ENCODE measurements at regions of chr10 and their contacts with region 1.

Region 1: DNA sequence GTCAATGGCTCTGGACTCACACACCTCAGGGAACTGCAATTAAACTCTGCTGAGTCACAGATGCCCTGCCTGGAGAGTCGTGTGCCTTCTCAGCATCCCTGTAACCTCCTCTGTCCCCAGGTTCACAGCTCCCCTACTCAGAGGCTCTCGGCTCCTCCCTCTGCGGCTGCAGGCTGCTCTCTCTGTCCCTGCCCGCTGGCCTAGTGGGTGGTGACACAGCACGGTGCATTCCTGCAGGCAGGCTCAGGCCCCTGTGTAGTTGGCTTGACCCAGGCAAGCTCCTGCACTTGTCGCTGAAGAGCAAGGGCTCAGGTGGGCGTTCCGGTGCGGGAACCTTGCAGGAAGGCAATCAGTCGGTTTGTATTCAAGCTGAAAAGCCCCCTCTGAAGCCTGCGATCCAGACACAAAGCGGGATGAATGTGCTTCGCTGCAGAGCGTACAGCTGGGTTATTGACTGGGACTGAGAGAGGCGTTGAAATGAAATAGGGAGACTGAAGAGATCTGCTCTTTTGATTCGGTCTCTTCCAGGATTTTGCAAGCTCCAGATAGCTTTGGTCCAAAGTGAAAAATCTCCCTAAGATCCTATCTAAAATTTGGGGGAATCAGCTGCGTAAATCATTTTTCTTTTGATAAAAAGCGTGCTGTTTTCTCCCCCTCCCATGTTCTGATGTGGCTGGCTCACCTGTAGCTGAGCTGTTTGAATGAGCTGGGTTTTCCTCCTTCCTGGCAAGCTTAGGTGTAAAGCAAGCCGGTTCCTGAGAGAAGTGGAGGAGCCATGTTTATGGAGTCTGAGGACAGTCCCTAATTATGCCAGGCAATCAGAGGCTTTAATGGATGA is 208.7 kb upstream of the PHYHIPL start:
- DNase-seq: peak; percentile 61 to 90 (median 80)

Region 2: GRCh38 chr10:58856508-58857240 is 111.1 kb before region 1 on chr10:
- intact Hi-C with region 1: no loop called
- DNase-seq: no peak

Region 3: GRCh38 chr10:58998924-58999713 is 31.3 kb after region 1 on chr10:
- intact Hi-C with region 1: loop called (anchors 5 kb)
- DNase-seq: peak; percentile 66 to 95 (median 88)

Region 4: GRCh38 chr10:59047957-59048618 is 80.3 kb after region 1 on chr10:
- intact Hi-C with region 1: no loop called
- DNase-seq: no peak

Region 5: DNA sequence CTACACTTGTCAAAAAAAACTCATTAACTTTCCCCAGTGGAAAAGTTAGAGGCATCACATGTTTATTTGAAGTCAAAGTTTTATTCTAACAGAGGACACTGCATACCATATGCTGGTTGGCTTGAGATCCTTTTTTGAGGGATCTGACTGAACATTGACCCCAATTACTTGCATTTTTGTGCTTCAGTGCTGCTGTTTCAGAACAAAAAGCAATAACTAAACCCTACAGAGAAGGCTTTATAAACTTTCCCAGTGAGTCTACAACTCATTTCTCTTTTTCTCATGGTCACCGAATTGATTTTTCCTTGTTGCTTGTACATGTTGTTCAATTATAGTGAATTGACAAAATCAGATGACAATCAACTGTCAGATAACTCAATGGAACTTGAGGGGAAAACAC is 139.4 kb after region 1 on chr10:
- intact Hi-C with region 1: loop called (anchors 10 kb)
- DNase-seq: no peak

Region 6: GRCh38 chr10:59177031-59177797 is 209.4 kb after region 1 on chr10:
- intact Hi-C with region 1: loop called (anchors 5 kb)
- DNase-seq: peak; percentile 11 to 85 (median 67)

Measured in head of caudate nucleus (tissue), 42 donors.